ENCODE measurements at regions of chr7 and their contacts with region 1.

Region 1: GRCh38 chr7:158863611-158864506 is 7.5 kb downstream of the DYNC2I1 start:
- DNase-seq: peak; percentile 63
- H3K4me3 ChIP-seq: peak overlapping the region; percentile 44 to 54
- H3K27ac ChIP-seq: peak overlapping the region; percentile 79 to 85
- H3K4me1 ChIP-seq: no peaks in the 10 kb centered on the region
- H3K27me3 ChIP-seq: no peaks in the 10 kb centered on the region
- CTCF ChIP-seq: no peak
- POLR2A ChIP-seq: no peak

Region 2: DNA sequence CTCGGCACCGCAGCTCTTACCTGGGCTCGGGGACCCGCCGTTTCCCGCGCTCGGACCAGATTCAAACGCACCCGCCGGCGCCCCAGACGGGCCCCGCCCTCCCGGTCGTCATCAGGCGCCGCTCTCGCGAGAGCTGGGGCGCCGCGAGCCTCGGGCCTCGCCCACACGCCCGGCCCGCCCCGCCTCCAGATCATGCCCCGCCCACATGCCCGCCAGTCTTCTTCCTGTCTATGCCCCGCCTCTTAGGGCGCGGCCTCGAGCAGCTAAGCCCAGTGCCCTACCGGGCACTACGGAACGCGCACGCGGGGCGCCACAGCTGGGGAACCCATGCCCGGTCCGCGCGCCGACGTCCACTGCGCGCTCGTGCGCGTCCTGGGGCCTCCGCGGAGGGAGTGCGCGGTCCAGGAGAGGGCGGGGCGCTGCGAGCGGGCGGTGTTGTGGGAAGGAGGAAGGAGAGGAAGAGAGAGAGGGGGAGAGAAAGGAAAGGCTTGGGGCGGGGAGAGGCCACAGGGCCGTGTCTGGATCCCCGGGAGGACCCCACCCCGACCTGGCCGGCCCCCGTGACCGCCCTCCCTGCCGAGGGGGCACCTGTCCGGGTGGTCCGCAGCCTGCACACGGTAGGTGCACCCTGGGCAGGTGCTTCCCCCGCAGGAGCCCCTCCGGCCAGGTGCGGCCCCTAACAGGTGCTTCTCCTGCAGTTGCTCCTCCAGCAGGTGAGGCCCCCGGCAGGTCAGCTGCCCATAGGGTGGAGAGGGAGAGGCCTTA is 159.0 kb before region 1 on chr7 and contains the start of gene NCAPG2:
- intact Hi-C with region 1: loop called (anchors 10 kb)
- DNase-seq: peak; percentile 97
- H3K4me3 ChIP-seq: peak within 1 kb of the TSS; percentile 81 to 91
- H3K27ac ChIP-seq: peak within 1 kb of the TSS; percentile 86 to 91
- H3K4me1 ChIP-seq: no peaks in the 10 kb centered on the region
- H3K27me3 ChIP-seq: no peaks in the 10 kb centered on the region
- CTCF ChIP-seq: peak; percentile 30 to 73 (median 52)
- POLR2A ChIP-seq: peak; percentile 99
- total RNA-seq, gene NCAPG2: 7.9 to 11.9 TPM

Region 3: DNA sequence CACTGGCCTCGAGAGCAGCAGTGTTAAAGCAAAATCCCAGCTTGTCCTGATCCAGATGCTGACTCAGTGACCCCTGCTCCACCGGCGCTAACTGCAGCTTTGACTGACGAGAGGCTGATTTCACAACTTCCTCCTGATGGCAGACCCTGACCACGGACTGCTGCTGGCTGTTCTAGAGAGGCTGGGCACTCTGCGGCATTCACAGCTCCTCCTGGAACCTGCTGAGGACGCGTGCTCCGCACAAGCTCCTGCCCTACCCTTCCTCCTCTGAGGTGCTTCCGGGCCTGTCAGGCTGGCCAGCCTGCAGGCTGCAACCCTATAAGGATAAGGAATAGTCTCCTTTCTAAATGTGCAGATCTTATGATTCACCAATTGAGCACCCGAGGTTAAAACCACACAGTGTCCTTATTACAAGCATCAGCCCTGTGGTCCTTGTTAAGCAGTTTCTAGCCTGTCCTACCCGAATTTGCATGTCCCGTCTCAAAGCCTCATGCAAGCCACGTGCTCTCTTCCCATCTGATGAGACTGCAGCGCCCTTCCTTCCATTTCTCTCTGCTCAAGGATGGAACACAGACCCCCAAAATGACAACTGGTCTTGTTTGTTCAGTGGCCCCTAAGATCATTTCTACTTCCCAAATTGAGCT is 123.7 kb before region 1 on chr7:
- intact Hi-C with region 1: no loop called
- DNase-seq: no peak
- H3K4me3 ChIP-seq: no peak overlapping the region
- H3K27ac ChIP-seq: peak overlapping the region; percentile 57 to 62
- H3K4me1 ChIP-seq: no peaks in the 10 kb centered on the region
- H3K27me3 ChIP-seq: no peaks in the 10 kb centered on the region
- CTCF ChIP-seq: no peak
- POLR2A ChIP-seq: no peak

Measured in prostate gland (tissue), 2 donors.